GM18951 (cell line): ENCODE measurements at regions of chr4 and their contacts with region 1.

Region 1: GRCh38 chr4:40897557-40898203 is 147.9 kb downstream of the NSUN7 start:
- POLR2A ChIP-seq: no peak

Region 2: DNA sequence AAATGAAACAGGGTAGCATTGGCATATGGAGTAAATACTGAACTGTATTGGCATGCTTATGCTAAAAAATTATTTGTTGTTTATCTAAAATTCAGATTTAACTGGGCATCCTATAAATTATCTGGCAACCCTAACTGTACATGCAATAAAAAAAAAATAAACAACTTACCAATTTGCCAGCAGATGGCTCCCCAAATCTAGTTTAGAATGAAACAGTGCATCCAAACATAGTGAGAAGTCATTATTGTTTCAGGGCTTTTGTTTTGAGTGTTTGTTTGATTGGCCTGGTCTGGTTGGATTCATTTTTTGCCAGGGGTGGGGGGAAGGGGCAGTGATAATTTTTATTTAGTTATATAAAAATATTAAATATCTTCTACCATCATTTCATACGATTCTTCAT is 160.8 kb before region 1 on chr4:
- in situ Hi-C with region 1: loop called (anchors 10 kb)
- POLR2A ChIP-seq: no peak

Region 3: DNA sequence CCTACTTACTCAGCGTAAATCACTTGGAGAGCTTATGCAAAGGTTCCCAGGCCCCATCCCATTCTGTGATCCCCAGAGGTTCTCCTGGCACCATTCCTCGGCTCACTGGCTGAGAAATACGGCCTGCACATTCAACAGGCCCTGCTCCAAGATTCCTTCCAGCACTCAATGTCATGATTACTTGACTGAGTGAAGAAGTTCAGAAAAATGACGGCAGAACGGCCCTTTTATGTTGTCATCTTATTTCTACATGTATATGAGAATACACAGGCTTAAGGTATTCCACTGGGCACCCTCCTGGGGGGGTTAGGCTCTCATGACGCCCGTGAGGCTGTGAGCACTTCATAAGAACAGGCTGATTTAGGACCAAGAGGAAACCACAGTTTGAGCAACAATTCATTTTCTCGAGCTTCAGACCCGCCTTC is 42.6 kb after region 1 on chr4:
- in situ Hi-C with region 1: no loop called
- POLR2A ChIP-seq: no peak